Activated CD4-positive, alpha-beta T cell treated with anti-CD3 and anti-CD28 coated beads for 36 hours (primary cell): ENCODE measurements at regions of chr5 and their contacts with region 1.

Region 1: GRCh38 chr5:112551419-112552032 is 132.4 kb upstream of the EPB41L4A start:
- DNase-seq: peak; percentile 37
- ATAC-seq: peak; percentile 47
- H3K4me3 Mint-ChIP-seq: no peak overlapping the region
- H3K27ac Mint-ChIP-seq: no peak overlapping the region
- H3K4me1 Mint-ChIP-seq: no peaks in the 10 kb centered on the region
- H3K27me3 Mint-ChIP-seq: no peaks in the 10 kb centered on the region

Region 2: DNA sequence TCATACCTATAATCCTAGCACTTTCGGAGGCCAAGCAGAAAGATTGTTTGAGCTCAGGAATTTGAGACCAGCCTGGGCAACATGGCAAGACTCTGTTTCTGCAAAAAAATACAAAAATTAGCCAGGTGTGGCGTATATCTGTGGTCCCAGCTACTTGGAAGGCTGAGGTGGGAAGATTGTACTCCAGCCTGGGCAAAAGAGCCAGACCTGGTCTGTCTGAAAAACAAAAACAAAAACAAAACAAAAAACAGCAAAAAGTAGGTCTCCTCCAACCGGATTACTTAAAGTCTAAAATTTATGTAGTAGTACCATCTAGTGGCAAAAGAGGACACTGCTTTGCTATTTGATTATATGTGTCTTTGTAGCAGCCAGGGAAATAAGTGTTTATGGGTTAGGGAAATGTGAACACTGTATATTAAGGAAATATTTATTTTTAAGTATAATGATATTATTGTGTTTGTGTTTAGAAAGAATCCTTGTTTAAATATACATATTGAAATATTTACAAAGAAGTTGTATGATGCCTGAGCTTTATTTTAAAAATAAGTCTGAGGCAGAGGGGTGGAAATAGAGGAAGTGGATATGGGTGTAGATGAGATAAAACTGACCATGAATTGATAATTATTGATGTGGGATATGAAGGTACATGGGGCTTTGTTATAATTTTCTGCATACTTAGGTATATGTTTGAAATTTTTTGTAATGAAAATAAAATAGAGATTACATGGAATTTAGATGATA is 206.1 kb after region 1 on chr5:
- CTCF ChIA-PET with region 1: interaction called, 93 read pairs
- POLR2A ChIA-PET with region 1: no interaction called
- intact Hi-C with region 1: loop called (anchors 1 kb)
- DNase-seq: no peak
- ATAC-seq: peak; percentile 74
- H3K4me3 Mint-ChIP-seq: no peak overlapping the region
- H3K27ac Mint-ChIP-seq: peak overlapping the region; percentile 51
- H3K4me1 Mint-ChIP-seq: peaks cover 2% of the 10 kb centered on the region
- H3K27me3 Mint-ChIP-seq: no peaks in the 10 kb centered on the region

Region 3: GRCh38 chr5:112848116-112848811 is 296.7 kb after region 1 on chr5:
- CTCF ChIA-PET with region 1: interaction called, 5 read pairs
- POLR2A ChIA-PET with region 1: no interaction called
- intact Hi-C with region 1: loop called (anchors 1 to 2 kb)
- DNase-seq: peak; percentile 17
- ATAC-seq: peak; percentile 100
- H3K4me3 Mint-ChIP-seq: no peak overlapping the region
- H3K27ac Mint-ChIP-seq: peak overlapping the region; percentile 81
- H3K4me1 Mint-ChIP-seq: peaks cover 4% of the 10 kb centered on the region
- H3K27me3 Mint-ChIP-seq: no peaks in the 10 kb centered on the region

Region 4: GRCh38 chr5:112968411-112969106 is 417.0 kb after region 1 on chr5:
- CTCF ChIA-PET with region 1: interaction called, 3 read pairs
- POLR2A ChIA-PET with region 1: no interaction called
- intact Hi-C with region 1: loop called (anchors 2 kb)
- DNase-seq: no peak
- ATAC-seq: no peak
- H3K4me3 Mint-ChIP-seq: no peak overlapping the region
- H3K27ac Mint-ChIP-seq: no peak overlapping the region
- H3K4me1 Mint-ChIP-seq: peaks cover 33% of the 10 kb centered on the region
- H3K27me3 Mint-ChIP-seq: no peaks in the 10 kb centered on the region

Region 5: DNA sequence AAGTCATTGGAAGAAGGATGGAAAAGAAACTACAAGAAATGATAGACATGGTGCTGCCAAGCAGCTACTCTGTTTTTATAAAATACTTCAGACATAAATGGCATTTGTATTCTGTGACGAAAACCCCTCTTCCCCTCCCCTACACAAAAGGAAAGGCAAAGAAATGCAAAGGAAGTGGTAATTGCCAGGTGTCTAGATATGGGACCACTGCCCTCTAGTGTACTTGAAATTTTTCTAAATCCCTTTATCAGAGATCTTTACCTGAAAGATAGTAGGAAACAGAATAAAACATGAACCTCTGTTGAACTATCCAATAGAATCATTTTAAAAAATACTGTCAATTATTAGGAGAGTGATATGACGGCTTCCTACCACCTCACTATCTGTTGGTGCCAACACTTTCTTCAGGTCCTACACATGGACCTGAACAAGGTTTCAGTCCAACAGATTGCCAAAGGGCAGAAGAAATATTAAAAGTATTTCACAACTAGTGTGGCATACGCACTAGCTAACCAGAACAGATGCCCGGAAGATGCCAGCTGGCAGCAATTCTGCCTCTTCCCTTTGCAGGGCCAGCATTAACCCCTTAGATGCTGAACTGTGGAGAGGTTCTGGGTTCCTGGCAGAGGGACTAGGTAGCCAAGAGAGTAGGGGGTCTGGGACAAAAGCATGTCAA is 779.1 kb after region 1 on chr5:
- CTCF ChIA-PET with region 1: no interaction called
- POLR2A ChIA-PET with region 1: no interaction called
- intact Hi-C with region 1: loop called in 1 of 2 experiments (anchors 1 kb)
- DNase-seq: peak; percentile 13
- ATAC-seq: peak; percentile 78
- H3K4me3 Mint-ChIP-seq: no peak overlapping the region
- H3K27ac Mint-ChIP-seq: peak overlapping the region; percentile 17
- H3K4me1 Mint-ChIP-seq: peaks cover 11% of the 10 kb centered on the region
- H3K27me3 Mint-ChIP-seq: no peaks in the 10 kb centered on the region